Dendritic cell treated with granulocyte-macrophage colony-stimulating factor and Interleukin-4, amounts not matched to agents 40 ng/mL and 50 ng/mL, for 4 days (primary cell): ENCODE measurements at regions of chr3 and their contacts with region 1.

Region 1: GRCh38 chr3:8111069-8111798 is 390.4 kb upstream of the LMCD1 start:
- H3K4me3 Mint-ChIP-seq: no peak overlapping the region
- H3K27ac Mint-ChIP-seq: no peak overlapping the region
- H3K4me1 Mint-ChIP-seq: peaks cover 23% of the 10 kb centered on the region
- H3K27me3 Mint-ChIP-seq: no peaks in the 10 kb centered on the region

Region 2: GRCh38 chr3:7285505-7285904 is 825.7 kb before region 1 on chr3:
- intact Hi-C with region 1: loop called (anchors 1 kb)
- H3K4me3 Mint-ChIP-seq: no peak overlapping the region
- H3K27ac Mint-ChIP-seq: no peak overlapping the region
- H3K4me1 Mint-ChIP-seq: peaks cover 4% of the 10 kb centered on the region
- H3K27me3 Mint-ChIP-seq: no peaks in the 10 kb centered on the region

Region 3: DNA sequence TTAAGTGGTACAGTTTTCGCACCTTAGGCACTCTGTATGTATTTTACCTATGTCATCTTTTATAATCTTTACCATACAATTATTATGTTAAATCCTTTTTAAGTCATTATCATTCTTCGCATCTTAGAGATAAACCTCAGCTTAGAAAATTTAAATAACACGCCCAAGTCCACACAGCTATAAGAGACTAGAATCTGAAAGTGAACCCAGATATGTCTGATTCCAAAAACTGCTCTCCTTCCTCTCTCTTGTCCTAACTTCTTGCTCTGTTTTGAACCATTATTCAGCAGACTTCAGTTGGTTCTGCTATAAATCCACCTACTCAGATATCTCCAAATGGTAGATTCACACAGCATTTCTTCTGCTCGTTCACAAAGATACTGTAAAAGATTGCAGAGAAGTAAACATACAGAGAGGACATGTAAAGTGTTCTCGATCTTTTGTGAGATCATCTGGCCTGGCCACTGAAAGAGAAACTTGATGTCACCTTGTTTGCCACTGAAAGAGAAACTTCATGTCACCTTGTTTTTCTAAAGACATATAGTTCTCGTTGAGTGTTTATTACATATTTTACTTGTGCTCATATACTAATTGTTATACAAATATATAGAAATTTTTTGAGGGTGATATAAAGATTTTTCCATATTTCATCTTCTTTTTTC is 717.2 kb before region 1 on chr3:
- intact Hi-C with region 1: loop called (anchors 2 kb)
- H3K4me3 Mint-ChIP-seq: no peak overlapping the region
- H3K27ac Mint-ChIP-seq: no peak overlapping the region
- H3K4me1 Mint-ChIP-seq: no peaks in the 10 kb centered on the region
- H3K27me3 Mint-ChIP-seq: peaks cover 2% of the 10 kb centered on the region

Region 4: GRCh38 chr3:7798276-7798675 is 313.0 kb before region 1 on chr3:
- intact Hi-C with region 1: loop called (anchors 10 kb)
- H3K4me3 Mint-ChIP-seq: no peak overlapping the region
- H3K27ac Mint-ChIP-seq: no peak overlapping the region
- H3K4me1 Mint-ChIP-seq: peaks cover 13% of the 10 kb centered on the region
- H3K27me3 Mint-ChIP-seq: peaks cover 6% of the 10 kb centered on the region

Region 5: DNA sequence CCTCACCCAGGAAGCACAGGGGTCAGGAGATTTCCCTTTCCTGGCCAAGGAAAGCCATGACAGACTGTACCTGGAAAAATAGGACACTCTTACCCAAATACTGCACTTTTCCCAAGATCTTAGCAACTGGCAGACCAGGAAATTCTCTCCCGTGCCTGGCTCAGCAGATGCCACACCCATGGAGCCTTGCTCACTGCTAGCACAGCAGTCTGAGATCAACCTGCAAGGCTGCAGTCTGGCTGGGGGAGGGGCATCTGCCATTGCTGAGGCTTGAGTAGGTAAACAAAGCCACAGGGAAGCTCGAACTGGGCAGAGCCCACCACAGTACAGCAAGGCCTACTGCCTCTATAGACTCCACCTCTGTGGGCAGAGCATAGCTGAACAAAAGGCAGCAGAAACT is 176.9 kb before region 1 on chr3:
- intact Hi-C with region 1: no loop called
- H3K4me3 Mint-ChIP-seq: no peak overlapping the region
- H3K27ac Mint-ChIP-seq: no peak overlapping the region
- H3K4me1 Mint-ChIP-seq: no peaks in the 10 kb centered on the region
- H3K27me3 Mint-ChIP-seq: no peaks in the 10 kb centered on the region

Region 6: DNA sequence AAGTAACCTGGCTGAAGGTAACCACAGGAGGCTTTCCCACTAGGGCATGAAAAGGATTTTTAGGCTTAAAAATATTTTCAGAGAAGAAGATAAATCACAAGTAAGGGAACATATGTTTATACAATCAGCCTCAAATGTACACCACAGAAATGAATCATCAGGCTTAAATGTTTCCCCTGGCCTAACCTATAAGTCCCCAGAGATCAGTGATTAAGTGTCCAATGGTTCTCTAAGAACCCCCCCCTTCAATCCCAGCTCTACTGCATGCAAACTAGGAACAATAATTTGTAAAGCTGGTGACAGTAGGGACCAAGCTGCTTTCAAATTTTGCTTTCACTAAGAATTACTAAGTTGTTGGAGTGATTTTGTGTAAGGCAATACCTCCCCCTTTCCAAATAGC is 41.2 kb before region 1 on chr3:
- intact Hi-C with region 1: no loop called
- H3K4me3 Mint-ChIP-seq: no peak overlapping the region
- H3K27ac Mint-ChIP-seq: no peak overlapping the region
- H3K4me1 Mint-ChIP-seq: no peaks in the 10 kb centered on the region
- H3K27me3 Mint-ChIP-seq: no peaks in the 10 kb centered on the region